ENCODE measurements at regions of chr2 and their contacts with region 1.

Region 1: GRCh38 chr2:48530033-48530804 is at the start of gene STON1:
- DNase-seq: peak; percentile 21
- H3K4me3 Mint-ChIP-seq: peak within 1 kb of the TSS; percentile 79
- H3K27ac Mint-ChIP-seq: no peak within 1 kb of the TSS
- H3K4me1 Mint-ChIP-seq: peaks cover 14% of the 10 kb centered on the region
- H3K27me3 Mint-ChIP-seq: no peaks in the 10 kb centered on the region
- total RNA-seq, gene STON1: 0.45 to 0.57 TPM

Region 2: DNA sequence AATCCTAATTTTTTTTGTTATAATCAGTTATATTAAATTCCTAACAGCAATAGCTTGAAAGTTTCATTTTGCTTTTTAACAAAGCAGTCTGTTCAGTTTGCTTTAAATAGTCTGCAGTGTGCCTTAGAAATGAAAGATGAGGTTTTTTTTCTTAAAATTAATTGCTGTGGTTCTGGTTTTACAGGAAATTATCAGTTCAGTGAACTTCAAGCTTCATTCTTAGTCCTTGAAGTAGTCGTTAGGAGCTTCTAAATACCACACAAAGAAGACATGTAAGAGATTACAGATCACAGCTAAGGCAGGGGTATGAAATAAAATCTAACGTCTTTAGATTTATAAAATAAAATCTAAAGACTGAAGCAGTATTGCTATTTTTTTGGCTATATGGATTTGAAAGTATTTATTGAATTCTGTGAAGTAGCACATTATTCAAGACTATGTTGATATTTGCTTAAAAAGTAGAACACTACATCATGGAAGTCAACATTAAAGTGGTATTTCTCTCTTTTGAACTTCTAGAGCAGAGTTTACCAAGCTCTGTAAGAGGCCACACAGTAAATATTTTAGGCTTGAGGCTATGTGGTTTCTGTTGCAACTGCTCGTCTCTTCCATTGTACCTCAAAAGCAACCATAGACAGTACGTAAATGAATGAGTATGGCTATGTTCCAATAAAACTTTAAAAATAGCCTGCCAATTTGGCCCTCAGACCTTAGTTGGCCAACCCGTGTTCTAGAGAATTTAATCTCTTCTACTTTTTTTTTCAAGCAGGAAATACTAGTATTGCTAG is 81.8 kb before region 1 on chr2:
- CTCF ChIA-PET with region 1: no interaction called
- intact Hi-C with region 1: loop called (anchors 5 kb)
- DNase-seq: no peak
- H3K4me3 Mint-ChIP-seq: peak overlapping the region; percentile 46
- H3K27ac Mint-ChIP-seq: peak overlapping the region; percentile 84
- H3K4me1 Mint-ChIP-seq: peaks cover 48% of the 10 kb centered on the region
- H3K27me3 Mint-ChIP-seq: no peaks in the 10 kb centered on the region

Region 3: DNA sequence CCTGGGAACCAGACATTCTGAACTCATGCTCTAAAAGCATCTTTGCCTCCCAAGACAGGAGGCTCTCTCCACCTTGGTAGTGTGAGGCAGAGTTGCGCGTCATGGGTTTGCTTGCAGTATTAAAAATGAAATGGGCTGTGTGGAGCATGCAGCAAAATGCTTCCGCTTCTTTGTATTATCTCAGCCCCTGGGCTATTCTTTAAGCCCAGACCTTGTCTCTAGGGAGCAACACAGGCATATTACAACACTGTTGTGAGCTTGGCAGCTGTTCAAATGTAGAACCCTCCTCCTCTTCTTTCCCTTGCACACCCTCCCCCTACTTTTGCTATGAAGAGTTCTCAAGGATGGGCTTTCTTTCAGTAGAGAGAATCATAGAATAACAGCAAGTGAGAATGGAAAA is 410.4 kb after region 1 on chr2:
- CTCF ChIA-PET with region 1: no interaction called
- intact Hi-C with region 1: no loop called
- DNase-seq: no peak
- H3K4me3 Mint-ChIP-seq: no peak overlapping the region
- H3K27ac Mint-ChIP-seq: no peak overlapping the region
- H3K4me1 Mint-ChIP-seq: no peaks in the 10 kb centered on the region
- H3K27me3 Mint-ChIP-seq: no peaks in the 10 kb centered on the region

Measured in activated naive CD4-positive, alpha-beta T cell treated with anti-CD3 and anti-CD28 coated beads for 36 hours (primary cell).